ENCODE measurements at regions of chr16 and their contacts with region 1.

Region 1: GRCh38 chr16:57475711-57476339 is 10.5 kb downstream of the DOK4 start:
- DNase-seq: peak in 1 of 2 donors; percentile 73
- H3K4me3 ChIP-seq: no peak overlapping the region
- H3K27ac ChIP-seq: peak overlapping the region in 1 of 2 donors; percentile 82
- H3K4me1 ChIP-seq: peaks cover 15 to 40% of the 10 kb centered on the region in 2 donors
- H3K27me3 ChIP-seq: no peaks in the 10 kb centered on the region
- CTCF ChIP-seq: peak; percentile 20 to 46 (median 39)

Region 2: DNA sequence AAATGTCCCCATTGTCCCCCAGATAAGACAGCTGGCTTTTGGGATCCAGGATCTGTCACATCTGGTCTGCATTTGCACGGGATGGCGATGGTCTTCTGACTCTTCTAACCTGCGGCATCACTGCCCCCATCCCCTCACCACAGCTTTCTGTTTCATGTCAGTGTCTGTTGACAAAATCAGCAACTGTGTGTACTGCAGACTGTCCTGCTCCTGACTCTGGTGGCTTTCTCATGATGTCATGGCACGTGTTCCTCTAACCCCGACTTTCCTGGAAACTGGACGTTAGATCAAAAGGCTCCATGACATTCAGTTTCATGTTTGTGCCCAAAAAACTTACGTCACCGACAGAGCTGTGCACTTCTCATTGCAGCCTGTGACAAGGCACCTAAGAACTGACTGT is 413.5 kb before region 1 on chr16:
- intact Hi-C with region 1: no loop called
- DNase-seq: no peak
- H3K4me3 ChIP-seq: no peak overlapping the region
- H3K27ac ChIP-seq: peak overlapping the region; percentile 88 to 90
- H3K4me1 ChIP-seq: peaks cover 9 to 10% of the 10 kb centered on the region in 2 donors
- H3K27me3 ChIP-seq: no peaks in the 10 kb centered on the region
- CTCF ChIP-seq: no peak

Region 3: GRCh38 chr16:57810197-57811031 is 334.6 kb after region 1 on chr16:
- intact Hi-C with region 1: loop called (anchors 10 kb)
- DNase-seq: peak; percentile 69 to 86
- H3K4me3 ChIP-seq: no peak overlapping the region
- H3K27ac ChIP-seq: no peak overlapping the region
- H3K4me1 ChIP-seq: peaks cover 0 to 8% of the 10 kb centered on the region in 2 donors
- H3K27me3 ChIP-seq: no peaks in the 10 kb centered on the region
- CTCF ChIP-seq: no peak